MCF 10A (cell line): ENCODE measurements at regions of chr2 and their contacts with region 1.

Region 1: GRCh38 chr2:46296840-46297545 is at the start of gene EPAS1:
- DNase-seq: peak; percentile 87
- H3K4me3 Mint-ChIP-seq: peak within 1 kb of the TSS; percentile 86
- H3K27ac Mint-ChIP-seq: peak within 1 kb of the TSS; percentile 75
- H3K4me1 Mint-ChIP-seq: peaks cover 8% of the 10 kb centered on the region
- H3K27me3 Mint-ChIP-seq: no peaks in the 10 kb centered on the region
- CTCF ChIP-seq: no peak
- total RNA-seq, gene EPAS1: 146 and 200 TPM in 2 replicates

Region 2: DNA sequence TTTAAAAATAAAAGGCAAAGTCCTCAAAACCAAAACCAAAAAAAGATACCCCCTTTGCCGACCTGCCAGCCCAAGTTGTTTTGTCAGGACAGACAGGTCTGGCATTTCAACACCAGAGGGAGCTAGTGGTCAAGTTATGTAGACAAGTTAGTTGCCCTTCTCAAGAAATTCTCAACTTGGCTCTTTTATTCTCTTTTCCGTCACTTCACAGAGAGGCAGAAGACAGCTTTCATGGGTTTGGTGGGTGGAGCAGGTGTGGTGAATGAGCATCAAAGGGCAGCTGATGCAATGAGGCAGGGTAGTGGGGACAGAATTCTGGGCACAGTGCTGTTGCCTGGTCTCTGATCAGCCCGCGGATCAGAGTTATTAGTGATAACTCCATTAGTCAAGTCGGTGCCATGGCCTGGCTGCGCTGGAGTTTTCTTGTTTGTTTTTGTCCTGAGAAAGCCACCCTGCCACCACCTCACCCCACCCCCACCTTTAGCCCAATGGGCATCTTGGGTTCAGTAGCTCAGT is 303.5 kb before region 1 on chr2:
- CTCF ChIA-PET with region 1: no interaction called
- POLR2A ChIA-PET with region 1: interaction called, 9 read pairs
- intact Hi-C with region 1: loop called (anchors 2 kb)
- DNase-seq: peak; percentile 89
- H3K4me3 Mint-ChIP-seq: no peak overlapping the region
- H3K27ac Mint-ChIP-seq: no peak overlapping the region
- H3K4me1 Mint-ChIP-seq: peaks cover 27% of the 10 kb centered on the region
- H3K27me3 Mint-ChIP-seq: no peaks in the 10 kb centered on the region
- CTCF ChIP-seq: peak; percentile 84

Region 3: GRCh38 chr2:46097714-46098480 is 199.1 kb before region 1 on chr2:
- CTCF ChIA-PET with region 1: no interaction called
- POLR2A ChIA-PET with region 1: interaction called, 16 read pairs
- intact Hi-C with region 1: no loop called
- DNase-seq: peak; percentile 92
- H3K4me3 Mint-ChIP-seq: peak overlapping the region; percentile 19
- H3K27ac Mint-ChIP-seq: peak overlapping the region; percentile 92
- H3K4me1 Mint-ChIP-seq: peaks cover 20% of the 10 kb centered on the region
- H3K27me3 Mint-ChIP-seq: no peaks in the 10 kb centered on the region
- CTCF ChIP-seq: no peak

Region 4: DNA sequence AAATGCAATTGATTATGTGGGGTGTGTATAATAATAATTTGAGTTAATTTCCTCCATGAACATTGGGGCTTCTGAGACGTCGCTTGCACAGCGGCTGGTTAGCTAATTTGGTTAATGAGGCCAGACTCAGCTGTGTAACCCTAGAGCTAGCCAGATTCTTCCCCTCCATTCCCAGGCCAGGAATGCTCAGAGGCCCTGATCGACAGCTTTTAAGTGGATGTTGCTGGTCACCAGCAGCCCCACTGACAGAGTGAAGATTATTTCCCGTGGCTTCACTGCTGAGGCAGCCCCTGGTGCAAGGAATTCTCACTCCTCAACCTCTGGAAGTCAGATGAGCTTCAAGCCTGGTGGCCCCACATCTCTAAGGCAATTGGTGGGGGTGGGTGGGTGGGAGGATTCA is 12.2 kb before region 1 on chr2:
- CTCF ChIA-PET with region 1: interaction called, 15 read pairs
- POLR2A ChIA-PET with region 1: interaction called, 4 read pairs
- intact Hi-C with region 1: no loop called
- DNase-seq: no peak
- H3K4me3 Mint-ChIP-seq: no peak overlapping the region
- H3K27ac Mint-ChIP-seq: no peak overlapping the region
- H3K4me1 Mint-ChIP-seq: no peaks in the 10 kb centered on the region
- H3K27me3 Mint-ChIP-seq: no peaks in the 10 kb centered on the region
- CTCF ChIP-seq: no peak

Region 5: DNA sequence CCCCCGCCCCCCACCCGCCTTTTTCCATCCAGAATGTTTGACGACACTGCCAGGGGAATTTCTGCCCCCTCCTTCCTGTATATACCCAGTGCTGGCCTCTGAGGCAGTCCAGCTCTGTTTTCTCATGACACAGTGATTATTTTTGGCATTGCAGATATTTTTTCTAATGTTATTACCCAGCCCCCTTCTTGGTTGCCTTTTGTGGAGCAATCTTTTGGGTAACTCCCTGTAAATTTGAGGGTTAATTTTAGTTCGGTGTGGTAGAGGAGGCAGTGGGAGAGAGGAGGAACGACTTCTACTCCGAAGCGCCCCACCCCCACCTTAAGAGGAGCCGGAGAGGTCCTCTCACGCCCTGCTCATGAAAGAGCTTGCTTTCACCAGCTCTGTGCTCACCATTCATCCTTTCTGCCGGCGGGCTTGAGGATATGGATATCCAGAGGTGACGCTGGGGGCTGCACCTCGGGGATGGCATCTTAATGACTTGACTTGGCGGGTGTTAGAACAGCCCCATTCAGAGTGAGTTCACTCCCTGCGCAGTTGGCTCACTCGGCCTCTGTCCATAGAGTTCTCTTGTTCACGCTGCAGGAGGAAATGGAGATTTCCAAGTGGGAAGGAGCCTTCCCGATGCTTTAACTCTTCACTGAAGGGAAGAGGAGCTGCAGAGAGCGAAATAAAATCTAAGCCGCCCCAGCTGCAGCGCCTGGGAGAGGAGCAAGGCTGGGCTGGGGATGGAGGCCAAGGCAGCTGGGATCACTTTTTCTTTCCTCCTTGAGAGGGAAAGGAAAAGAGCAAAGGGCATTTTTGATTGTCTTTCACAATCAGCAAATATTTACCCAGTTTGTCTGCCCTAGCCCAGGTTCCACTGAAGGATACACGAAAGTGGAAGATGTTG is 38.6 kb after region 1 on chr2:
- CTCF ChIA-PET with region 1: interaction called, 4 read pairs
- POLR2A ChIA-PET with region 1: interaction called, 553 read pairs
- intact Hi-C with region 1: loop called (anchors 1 kb)
- DNase-seq: peak; percentile 56
- H3K4me3 Mint-ChIP-seq: peak overlapping the region; percentile 46
- H3K27ac Mint-ChIP-seq: peak overlapping the region; percentile 95
- H3K4me1 Mint-ChIP-seq: peaks cover 64% of the 10 kb centered on the region
- H3K27me3 Mint-ChIP-seq: no peaks in the 10 kb centered on the region
- CTCF ChIP-seq: no peak